A673 (cell line): ENCODE measurements at regions of chr2 and their contacts with region 1.

Region 1: GRCh38 chr2:78940998-78941397 is 84.5 kb upstream of the REG3G start:
- DNase-seq: no peak
- H3K4me3 ChIP-seq: no peak overlapping the region
- H3K27ac ChIP-seq: no peak overlapping the region
- H3K4me1 ChIP-seq: no peaks in the 10 kb centered on the region
- H3K27me3 ChIP-seq: no peaks in the 10 kb centered on the region
- CTCF ChIP-seq: no peak

Region 2: DNA sequence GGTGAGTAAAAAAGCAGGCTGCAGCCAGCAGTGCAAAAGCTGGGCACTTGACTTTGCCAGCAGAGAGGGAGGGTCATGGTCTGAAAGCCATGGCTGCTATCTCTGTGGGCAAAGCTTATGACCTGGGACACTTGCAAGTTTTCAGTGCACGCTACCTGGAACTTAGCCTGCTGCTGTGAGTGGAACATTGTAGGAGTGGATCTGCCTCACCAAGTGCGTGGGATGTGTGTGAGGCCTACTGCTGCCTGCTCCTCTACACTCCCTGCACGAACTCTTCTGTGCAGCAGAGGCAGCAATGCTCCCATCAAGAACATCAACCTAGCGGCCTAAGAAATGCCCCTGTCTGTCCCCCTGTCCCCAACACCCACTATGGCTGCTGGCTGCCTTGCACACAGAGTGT is 259.6 kb before region 1 on chr2:
- CTCF ChIA-PET with region 1: no interaction called
- POLR2A ChIA-PET with region 1: interaction called, 10 read pairs
- intact Hi-C with region 1: no loop called
- DNase-seq: no peak
- H3K4me3 ChIP-seq: no peak overlapping the region
- H3K27ac ChIP-seq: no peak overlapping the region
- H3K4me1 ChIP-seq: no peaks in the 10 kb centered on the region
- H3K27me3 ChIP-seq: no peaks in the 10 kb centered on the region
- CTCF ChIP-seq: no peak

Region 3: DNA sequence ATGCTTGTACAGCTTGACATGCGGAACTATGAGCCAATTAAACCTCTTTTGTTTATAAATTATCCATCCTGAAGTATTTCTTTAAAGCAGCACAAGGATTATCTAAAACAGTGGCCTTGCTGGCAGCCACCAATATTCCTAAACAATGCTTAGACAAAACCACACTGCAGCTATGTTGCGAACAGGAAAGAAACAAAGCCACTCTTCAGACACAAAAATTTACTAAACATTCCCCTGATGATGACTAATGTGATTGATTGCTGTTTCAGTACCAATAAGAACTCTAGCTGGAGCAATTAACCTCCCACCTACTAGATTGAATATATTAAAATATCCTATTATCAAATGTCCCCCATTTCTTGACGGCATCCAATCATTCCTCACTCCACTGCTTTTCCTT is 241.3 kb before region 1 on chr2:
- CTCF ChIA-PET with region 1: no interaction called
- POLR2A ChIA-PET with region 1: no interaction called
- intact Hi-C with region 1: loop called (anchors 5 kb)
- DNase-seq: peak; percentile 24
- H3K4me3 ChIP-seq: no peak overlapping the region
- H3K27ac ChIP-seq: peak overlapping the region; percentile 30
- H3K4me1 ChIP-seq: peaks cover 8% of the 10 kb centered on the region
- H3K27me3 ChIP-seq: no peaks in the 10 kb centered on the region
- CTCF ChIP-seq: no peak

Region 4: DNA sequence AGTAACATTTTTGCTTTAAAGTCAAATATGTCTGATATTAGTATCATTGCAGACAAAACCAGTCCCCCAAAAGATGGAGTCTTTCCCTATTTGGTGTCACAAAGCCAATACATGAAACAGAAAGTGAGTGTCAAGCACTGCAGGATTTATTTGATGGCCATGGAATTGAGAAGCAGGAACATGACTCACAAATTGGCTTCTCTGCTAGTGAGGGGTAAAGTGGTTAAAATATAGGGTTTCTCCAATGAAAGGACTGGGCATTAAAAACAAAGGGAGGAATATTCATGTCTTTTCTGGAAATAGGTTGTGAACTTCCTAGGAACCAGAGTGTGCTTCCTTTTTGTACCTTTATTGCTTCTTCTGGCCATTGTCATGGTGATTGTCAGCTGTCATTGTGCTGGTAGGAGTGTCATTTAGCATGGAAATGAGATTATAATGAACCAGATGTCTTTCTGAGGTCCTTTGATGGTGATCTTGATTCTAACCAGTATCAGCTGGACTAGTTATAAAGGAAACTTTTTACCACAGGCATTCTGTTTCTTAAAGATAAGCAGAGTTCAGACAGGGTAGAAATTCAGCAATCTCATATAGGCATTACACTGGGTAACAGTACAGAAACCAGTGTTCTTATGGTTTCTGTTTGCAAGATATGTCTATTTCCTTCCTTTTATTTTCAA is 142.7 kb after region 1 on chr2:
- CTCF ChIA-PET with region 1: no interaction called
- POLR2A ChIA-PET with region 1: no interaction called
- intact Hi-C with region 1: no loop called
- DNase-seq: no peak
- H3K4me3 ChIP-seq: no peak overlapping the region
- H3K27ac ChIP-seq: no peak overlapping the region
- H3K4me1 ChIP-seq: no peaks in the 10 kb centered on the region
- H3K27me3 ChIP-seq: peaks cover 8% of the 10 kb centered on the region
- CTCF ChIP-seq: no peak